H1 (cell line): ENCODE measurements at regions of chr10 and their contacts with region 1.

Region 1: DNA sequence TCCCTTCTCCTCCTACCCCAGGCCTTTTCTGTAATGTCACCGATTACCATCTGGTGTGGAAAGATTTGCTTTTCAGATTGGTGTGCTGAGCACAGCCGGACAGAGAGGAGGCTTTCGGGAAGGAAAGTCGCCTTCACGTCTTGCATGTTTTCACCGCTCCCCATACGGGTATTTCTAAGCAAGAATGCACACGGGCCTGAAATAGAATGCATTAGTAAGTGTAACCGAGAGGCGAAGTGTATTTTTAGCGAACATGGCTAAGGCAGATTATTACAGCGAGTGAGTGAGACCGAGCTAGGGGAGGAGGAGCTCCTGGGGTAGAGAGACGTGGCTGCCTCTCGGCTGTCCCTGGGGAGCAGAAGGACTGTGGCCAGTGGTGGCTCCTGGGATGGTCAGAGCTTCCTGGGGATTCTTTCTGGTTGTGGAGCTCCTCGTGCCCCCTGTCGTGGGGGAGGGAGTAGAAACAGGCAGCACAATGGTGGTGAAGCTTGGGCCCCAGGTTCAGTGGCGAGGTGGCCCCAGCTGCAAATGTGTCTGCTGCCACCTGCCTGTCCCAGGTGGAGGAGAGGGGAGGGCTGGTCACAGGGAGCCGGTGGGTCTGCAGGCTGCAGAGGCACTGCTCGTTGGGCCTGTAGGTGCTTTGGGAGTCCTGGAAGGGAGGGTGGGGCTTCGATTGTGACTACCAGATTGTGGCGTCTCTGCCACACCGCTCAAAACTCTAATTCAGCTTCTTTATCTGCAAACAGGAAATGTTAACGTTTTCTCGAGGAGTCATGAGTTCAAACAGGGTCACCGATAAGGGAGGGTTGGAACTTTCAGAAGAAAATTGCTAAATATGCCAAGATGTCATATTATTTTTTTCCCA is 135.8 kb downstream of the CAMK1D start:
- DNase-seq: peak; percentile 9 to 56
- H3K4me3 ChIP-seq: no peak overlapping the region
- H3K27ac ChIP-seq: no peak overlapping the region
- H3K4me1 ChIP-seq: peaks cover 7 to 23% (median 15%) of the 10 kb centered on the region in 4 experiments
- H3K27me3 ChIP-seq: no peaks in the 10 kb centered on the region
- CTCF ChIP-seq: peak; percentile 43 to 56 (median 44); a peak in 3 of 4 replicates
- EP300 ChIP-seq: no peak
- POLR2A ChIP-seq: no peak
- RAD21 ChIP-seq: peak; percentile 43 to 66

Region 2: DNA sequence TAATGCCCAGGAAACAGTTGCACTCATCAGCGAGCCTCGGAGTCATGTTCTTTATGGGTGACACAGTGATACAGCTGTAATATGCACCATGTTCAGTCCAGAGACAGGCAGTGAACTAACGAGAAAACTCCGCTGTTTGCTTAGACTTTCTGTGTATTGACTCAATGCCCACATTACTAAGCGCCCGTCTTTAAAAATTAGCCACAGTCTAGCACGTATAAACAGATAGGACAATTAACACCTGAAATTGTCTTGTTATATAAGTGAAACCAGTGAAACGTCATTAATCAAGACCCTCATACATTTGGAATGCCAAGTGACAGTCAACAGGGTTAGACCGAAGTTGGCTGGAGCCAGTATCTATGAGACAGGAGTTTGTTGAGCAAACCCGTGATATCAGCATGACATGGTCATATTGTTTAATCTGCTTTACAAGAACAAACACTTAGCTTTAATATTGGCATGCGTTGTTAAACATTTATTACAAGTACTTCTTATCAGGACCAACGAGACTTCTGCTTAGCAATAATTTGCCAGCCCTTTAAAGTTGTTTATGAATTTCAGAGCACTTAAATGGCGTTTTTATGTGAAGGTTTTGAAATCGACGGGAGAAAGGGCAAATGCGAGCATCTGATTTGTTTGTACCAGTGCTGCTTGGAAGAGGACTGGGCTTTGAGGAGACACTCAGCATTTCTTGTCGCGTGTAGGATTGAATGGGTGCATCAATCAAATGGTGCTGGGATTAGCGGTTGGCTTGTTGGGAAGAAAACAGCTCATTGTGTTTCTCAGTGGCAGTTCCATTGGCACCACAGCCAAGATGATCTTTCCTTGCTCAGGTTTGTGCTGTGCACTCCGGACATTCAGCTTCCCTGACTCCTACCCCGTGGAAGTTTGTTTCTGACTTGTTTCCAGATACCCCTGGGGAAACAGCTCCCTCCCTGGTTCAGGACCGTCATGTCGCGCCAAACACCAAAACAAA is 79.5 kb before region 1 on chr10:
- CTCF ChIA-PET with region 1: interaction called, 10 read pairs
- POLR2A ChIA-PET with region 1: no interaction called
- DNase-seq: no peak
- H3K4me3 ChIP-seq: no peak overlapping the region
- H3K27ac ChIP-seq: no peak overlapping the region
- H3K4me1 ChIP-seq: no peaks in the 10 kb centered on the region; a peak in 1 of 7 replicates
- H3K27me3 ChIP-seq: no peaks in the 10 kb centered on the region
- CTCF ChIP-seq: peak in 1 of 3 experiments; percentile 27; a peak in 1 of 4 replicates
- EP300 ChIP-seq: no peak
- POLR2A ChIP-seq: no peak
- RAD21 ChIP-seq: no peak; a peak in 1 of 4 replicates

Region 3: GRCh38 chr10:12471142-12471541 is 14.0 kb before region 1 on chr10:
- CTCF ChIA-PET with region 1: interaction called, 13 read pairs
- POLR2A ChIA-PET with region 1: interaction called, 4 read pairs
- DNase-seq: no peak
- H3K4me3 ChIP-seq: no peak overlapping the region
- H3K27ac ChIP-seq: no peak overlapping the region
- H3K4me1 ChIP-seq: peaks cover 0 to 1% (median 0%) of the 10 kb centered on the region in 4 experiments; a peak in 3 of 7 replicates
- H3K27me3 ChIP-seq: no peaks in the 10 kb centered on the region
- CTCF ChIP-seq: no peak
- EP300 ChIP-seq: no peak
- POLR2A ChIP-seq: no peak
- RAD21 ChIP-seq: no peak